Activated CD4-positive, alpha-beta T cell treated with anti-CD3 and anti-CD28 coated beads for 36 hours (primary cell): ENCODE measurements at regions of chr14 and their contacts with region 1.

Region 1: DNA sequence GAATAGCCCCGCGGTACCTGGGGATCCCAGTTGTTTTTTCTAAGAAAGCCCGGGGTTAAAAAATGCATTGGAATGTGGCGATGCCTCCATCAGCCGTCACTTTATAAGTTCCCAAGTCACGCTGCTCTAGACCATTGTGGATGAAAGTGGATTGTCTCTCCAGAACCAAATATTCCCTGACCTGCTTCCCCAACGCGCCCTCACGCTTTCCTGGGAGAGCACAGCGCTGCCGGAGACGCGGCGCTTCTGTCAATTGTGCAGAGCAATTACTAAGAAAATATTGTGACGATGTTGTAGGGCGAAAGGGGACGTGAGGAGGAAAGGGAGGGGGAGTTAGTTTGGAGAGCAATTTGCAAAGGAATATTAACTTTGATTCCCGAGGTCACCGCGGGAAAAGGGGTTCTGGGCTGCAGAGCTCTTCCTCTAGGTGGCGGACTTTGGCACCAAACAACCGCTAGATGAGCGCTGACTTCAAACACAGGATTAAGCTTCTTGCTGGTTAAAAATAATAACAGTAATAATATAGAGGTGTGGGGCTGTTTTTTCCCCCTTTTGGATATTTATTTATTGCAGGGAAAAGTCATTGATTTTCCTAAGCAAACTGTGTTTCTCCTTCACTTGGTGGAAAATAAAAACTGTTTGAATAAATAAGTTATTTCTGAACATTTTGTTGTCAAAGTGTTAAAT is 9.6 kb upstream of the FOXG1 start:
- DNase-seq: peak; percentile 28
- ATAC-seq: no peak
- H3K4me3 Mint-ChIP-seq: no peak overlapping the region
- H3K27ac Mint-ChIP-seq: no peak overlapping the region
- H3K4me1 Mint-ChIP-seq: no peaks in the 10 kb centered on the region
- H3K27me3 Mint-ChIP-seq: peaks cover 68% of the 10 kb centered on the region

Region 2: GRCh38 chr14:28773861-28774691 is 17.0 kb after region 1 on chr14:
- CTCF ChIA-PET with region 1: no interaction called
- POLR2A ChIA-PET with region 1: no interaction called
- intact Hi-C with region 1: loop called in 1 of 2 experiments (anchors 2 kb)
- DNase-seq: peak; percentile 16
- ATAC-seq: no peak
- H3K4me3 Mint-ChIP-seq: no peak overlapping the region
- H3K27ac Mint-ChIP-seq: no peak overlapping the region
- H3K4me1 Mint-ChIP-seq: no peaks in the 10 kb centered on the region
- H3K27me3 Mint-ChIP-seq: peaks cover 62% of the 10 kb centered on the region

Region 3: DNA sequence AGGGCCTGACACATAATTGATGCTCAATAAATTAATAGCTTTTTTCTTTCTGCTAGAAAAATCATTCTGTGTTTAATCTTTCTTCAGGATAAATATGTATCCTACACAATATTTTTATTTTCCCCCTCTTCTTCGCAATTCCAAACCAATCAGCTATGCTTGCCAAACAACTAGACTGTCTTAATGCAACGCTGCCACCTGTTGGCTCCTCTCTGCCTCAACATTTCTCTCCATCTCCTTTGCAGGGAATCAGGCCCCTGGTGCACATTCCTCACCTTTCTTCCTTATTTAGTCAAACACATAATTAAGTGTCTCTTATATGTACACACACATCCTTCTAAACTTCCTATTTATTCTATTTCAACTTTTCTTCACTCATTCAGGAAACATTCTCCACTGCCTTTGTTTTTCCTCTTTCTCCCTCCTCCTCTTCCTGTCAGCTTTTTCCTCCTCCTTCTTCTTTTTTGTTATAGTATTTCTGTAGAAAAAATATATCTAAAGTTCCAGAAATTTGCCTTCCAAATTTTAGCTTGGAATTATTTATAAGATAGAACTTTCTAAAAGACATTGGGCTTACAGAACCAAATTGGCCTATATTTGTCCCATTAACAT is 764.6 kb after region 1 on chr14:
- CTCF ChIA-PET with region 1: no interaction called
- POLR2A ChIA-PET with region 1: no interaction called
- intact Hi-C with region 1: loop called in 1 of 2 experiments (anchors 1 kb)
- DNase-seq: peak; percentile 28
- ATAC-seq: no peak
- H3K4me3 Mint-ChIP-seq: no peak overlapping the region
- H3K27ac Mint-ChIP-seq: no peak overlapping the region
- H3K4me1 Mint-ChIP-seq: no peaks in the 10 kb centered on the region
- H3K27me3 Mint-ChIP-seq: no peaks in the 10 kb centered on the region